Activated CD4-positive, alpha-beta T cell treated with anti-CD3 and anti-CD28 coated beads, Interleukin-2, amount 10 ng/mL, durations not matched to agents 7 days and 5 days (primary cell): ENCODE measurements at regions of chr20 and their contacts with region 1.

Region 1: DNA sequence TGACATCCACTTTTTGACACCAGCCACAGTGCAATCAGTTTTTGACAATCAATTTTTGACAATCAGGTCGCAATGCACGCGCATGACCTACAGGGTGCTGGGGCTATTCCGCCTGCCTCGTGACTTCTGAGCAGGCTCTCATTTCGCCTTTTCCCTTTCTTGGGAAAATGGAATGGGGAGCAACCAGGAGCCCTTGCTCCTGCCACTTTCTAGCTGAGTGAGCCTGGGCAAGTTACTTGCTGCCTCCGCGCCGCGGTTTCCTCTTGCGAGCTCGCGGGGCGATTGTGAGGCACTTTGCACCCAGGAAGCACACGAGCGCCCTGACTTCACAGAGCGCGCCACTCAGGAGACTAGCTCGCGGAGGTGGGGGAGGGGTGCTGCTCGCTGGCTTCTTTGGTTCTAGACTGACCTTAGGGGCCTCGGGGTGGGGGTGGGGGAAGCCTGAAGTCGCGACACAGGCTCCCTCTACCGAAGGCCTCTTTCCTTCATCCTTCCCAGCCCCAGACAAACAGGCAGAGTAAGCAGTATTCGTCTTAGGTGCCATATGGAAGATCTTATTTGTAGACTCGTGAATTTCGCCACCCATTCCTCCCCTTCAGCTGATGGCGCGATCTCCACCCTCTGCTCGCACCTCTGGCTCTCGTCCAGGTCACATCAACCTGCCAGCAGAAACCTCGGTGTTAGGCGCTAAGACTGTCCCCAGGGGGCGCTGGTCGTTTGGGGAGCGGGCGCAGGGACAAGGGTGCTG is 4.6 kb downstream of the TP53TG5 start:
- DNase-seq: peak; percentile 90
- H3K4me3 Mint-ChIP-seq: peak overlapping the region; percentile 68
- H3K27ac Mint-ChIP-seq: peak overlapping the region; percentile 89
- H3K4me1 Mint-ChIP-seq: peaks cover 39% of the 10 kb centered on the region
- H3K27me3 Mint-ChIP-seq: no peaks in the 10 kb centered on the region

Region 2: GRCh38 chr20:45347936-45348778 is 25.4 kb before region 1 on chr20 and contains the start of gene SDC4:
- CTCF ChIA-PET with region 1: interaction called, 15 read pairs
- POLR2A ChIA-PET with region 1: no interaction called
- DNase-seq: peak; percentile 58
- H3K4me3 Mint-ChIP-seq: peak within 1 kb of the TSS; percentile 72
- H3K27ac Mint-ChIP-seq: peak within 1 kb of the TSS; percentile 76
- H3K4me1 Mint-ChIP-seq: peaks cover 30% of the 10 kb centered on the region
- H3K27me3 Mint-ChIP-seq: no peaks in the 10 kb centered on the region
- total RNA-seq, gene SDC4: 7.5 to 8.1 TPM

Region 3: GRCh38 chr20:45387274-45387673 is 13.7 kb after region 1 on chr20:
- CTCF ChIA-PET with region 1: interaction called, 17 read pairs
- POLR2A ChIA-PET with region 1: no interaction called
- DNase-seq: no peak
- H3K4me3 Mint-ChIP-seq: no peak overlapping the region
- H3K27ac Mint-ChIP-seq: no peak overlapping the region
- H3K4me1 Mint-ChIP-seq: no peaks in the 10 kb centered on the region
- H3K27me3 Mint-ChIP-seq: no peaks in the 10 kb centered on the region

Region 4: GRCh38 chr20:45410899-45411298 is 37.4 kb after region 1 on chr20:
- CTCF ChIA-PET with region 1: interaction called, 13 read pairs
- POLR2A ChIA-PET with region 1: no interaction called
- DNase-seq: no peak
- H3K4me3 Mint-ChIP-seq: no peak overlapping the region
- H3K27ac Mint-ChIP-seq: no peak overlapping the region
- H3K4me1 Mint-ChIP-seq: peaks cover 18% of the 10 kb centered on the region
- H3K27me3 Mint-ChIP-seq: peaks cover 2% of the 10 kb centered on the region

Region 5: GRCh38 chr20:45436732-45437391 is 63.3 kb after region 1 on chr20:
- CTCF ChIA-PET with region 1: interaction called, 76 read pairs
- POLR2A ChIA-PET with region 1: interaction called, 7 read pairs
- DNase-seq: peak; percentile 87
- H3K4me3 Mint-ChIP-seq: peak overlapping the region; percentile 72
- H3K27ac Mint-ChIP-seq: peak overlapping the region; percentile 33
- H3K4me1 Mint-ChIP-seq: peaks cover 21% of the 10 kb centered on the region
- H3K27me3 Mint-ChIP-seq: no peaks in the 10 kb centered on the region